Activated CD4-positive, alpha-beta T cell treated with anti-CD3 and anti-CD28 coated beads for 36 hours (primary cell): ENCODE measurements at regions of chr16 and their contacts with region 1.

Region 1: DNA sequence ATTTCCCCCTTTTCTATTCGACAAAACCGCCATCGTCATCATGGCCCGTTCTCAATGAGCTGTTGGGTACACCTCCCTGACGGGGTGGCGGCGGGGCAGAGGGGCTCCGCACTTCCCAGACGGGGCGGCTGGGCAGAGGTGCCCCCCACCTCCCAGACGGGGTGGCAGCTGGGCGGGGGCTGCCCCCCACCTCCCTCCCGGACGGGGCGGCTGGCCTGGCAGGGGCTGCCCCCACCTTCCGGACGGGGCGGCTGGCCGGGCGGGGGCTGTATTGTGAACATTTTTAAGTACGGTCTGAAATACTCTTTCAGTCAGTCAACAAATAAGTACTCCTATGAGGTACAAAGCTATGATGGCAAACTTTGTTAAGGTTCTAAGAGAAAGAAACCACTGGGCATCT is 222.8 kb downstream of the CNTNAP4 start:
- DNase-seq: no peak
- ATAC-seq: no peak
- H3K4me3 Mint-ChIP-seq: no peak overlapping the region
- H3K27ac Mint-ChIP-seq: no peak overlapping the region
- H3K4me1 Mint-ChIP-seq: no peaks in the 10 kb centered on the region
- H3K27me3 Mint-ChIP-seq: no peaks in the 10 kb centered on the region

Region 2: DNA sequence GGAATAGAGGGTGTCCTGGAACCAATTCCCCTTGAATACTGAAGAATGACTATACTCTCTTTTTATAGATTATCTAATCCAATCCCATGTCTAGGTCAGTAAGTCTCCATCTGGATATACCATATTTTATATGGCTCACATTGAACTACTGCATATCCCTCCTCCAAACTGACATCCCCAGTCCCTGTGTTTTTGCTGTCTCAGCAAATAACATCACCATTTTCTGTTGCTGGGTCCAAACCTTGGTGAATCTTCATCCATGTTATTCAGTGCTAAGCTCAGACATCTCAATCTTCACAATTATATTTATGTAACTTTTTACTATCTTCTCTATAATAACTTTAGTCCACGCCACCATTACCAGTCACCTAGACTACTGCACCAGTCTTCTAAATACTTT is 492.4 kb before region 1 on chr16:
- CTCF ChIA-PET with region 1: no interaction called
- POLR2A ChIA-PET with region 1: no interaction called
- intact Hi-C with region 1: loop called in 1 of 2 experiments (anchors 5 kb)
- DNase-seq: no peak
- ATAC-seq: no peak
- H3K4me3 Mint-ChIP-seq: no peak overlapping the region
- H3K27ac Mint-ChIP-seq: no peak overlapping the region
- H3K4me1 Mint-ChIP-seq: no peaks in the 10 kb centered on the region
- H3K27me3 Mint-ChIP-seq: no peaks in the 10 kb centered on the region

Region 3: GRCh38 chr16:76532188-76532973 is 32.4 kb after region 1 on chr16:
- CTCF ChIA-PET with region 1: no interaction called
- POLR2A ChIA-PET with region 1: no interaction called
- intact Hi-C with region 1: no loop called
- DNase-seq: no peak
- ATAC-seq: no peak
- H3K4me3 Mint-ChIP-seq: no peak overlapping the region
- H3K27ac Mint-ChIP-seq: no peak overlapping the region
- H3K4me1 Mint-ChIP-seq: no peaks in the 10 kb centered on the region
- H3K27me3 Mint-ChIP-seq: no peaks in the 10 kb centered on the region